Activated B cell treated with CpG ODN at 0.5 μM for 24 hours (primary cell): ENCODE measurements at regions of chr11 and their contacts with region 1.

Region 1: GRCh38 chr11:63738720-63739360 is 29.7 kb downstream of the ZFTA start:
- DNase-seq: peak; percentile 37
- ATAC-seq: no peak
- H3K4me3 Mint-ChIP-seq: no peak overlapping the region
- H3K27ac Mint-ChIP-seq: no peak overlapping the region
- H3K4me1 Mint-ChIP-seq: peaks cover 2% of the 10 kb centered on the region
- H3K27me3 Mint-ChIP-seq: no peaks in the 10 kb centered on the region
- CTCF ChIP-seq: peak; percentile 100

Region 2: DNA sequence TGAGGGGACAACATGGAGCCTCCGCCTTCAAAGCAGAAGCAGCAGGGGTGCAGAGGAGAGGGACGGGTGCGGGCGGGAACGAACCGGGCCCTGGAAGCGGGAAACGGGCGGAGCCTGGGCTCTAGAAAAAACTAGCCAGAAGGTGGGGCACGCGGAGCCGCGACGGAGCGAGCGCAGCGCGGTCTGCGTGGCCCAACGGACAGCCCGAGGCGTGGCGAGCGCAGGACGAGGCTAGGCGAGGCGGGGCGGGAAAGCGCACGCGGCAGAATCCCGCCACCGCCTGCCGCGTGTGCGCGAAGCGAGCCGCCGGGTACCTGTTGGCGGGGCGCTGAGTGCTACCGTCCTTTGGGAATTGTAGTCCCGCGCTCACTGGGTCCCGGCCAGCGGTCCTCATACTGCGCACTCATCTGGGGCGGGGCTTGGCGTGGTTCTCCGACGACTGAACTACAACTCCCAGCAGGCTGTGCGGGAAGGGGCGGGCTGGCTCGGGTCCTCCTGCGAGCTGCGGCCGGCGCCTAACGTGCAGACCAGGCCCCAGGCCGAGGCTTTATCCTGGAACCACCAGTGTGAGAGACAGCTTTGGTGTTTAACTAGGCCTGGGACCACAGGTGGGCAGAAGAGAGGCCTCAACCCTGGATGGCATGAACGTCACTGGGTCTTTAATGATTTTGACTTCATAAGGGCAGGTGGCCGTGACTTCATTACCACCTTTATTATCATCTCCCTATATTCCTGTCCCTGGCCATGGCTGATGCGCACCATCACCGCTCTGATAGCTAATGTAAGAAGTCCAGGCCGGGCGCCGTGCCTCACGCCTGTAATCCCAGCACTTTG is 67.3 kb before region 1 on chr11 and contains the start of gene ATL3:
- CTCF ChIA-PET with region 1: interaction called, 34 read pairs
- POLR2A ChIA-PET with region 1: no interaction called
- intact Hi-C with region 1: loop called (anchors 1 kb)
- DNase-seq: peak; percentile 97
- ATAC-seq: peak; percentile 95
- H3K4me3 Mint-ChIP-seq: peak within 1 kb of the TSS; percentile 84
- H3K27ac Mint-ChIP-seq: peak within 1 kb of the TSS; percentile 82
- H3K4me1 Mint-ChIP-seq: peaks cover 25% of the 10 kb centered on the region
- H3K27me3 Mint-ChIP-seq: no peaks in the 10 kb centered on the region
- CTCF ChIP-seq: no peak
- total RNA-seq, gene ATL3: 31.8 and 32.9 TPM in 2 replicates